A549 (cell line): ENCODE measurements at regions of chr14 and their contacts with region 1.

Region 1: GRCh38 chr14:59632381-59632780 is 55.8 kb upstream of the CCDC175 start:
- DNase-seq: peak; percentile 25 to 39
- ATAC-seq: peak; percentile 81 to 91
- H3K4me3 ChIP-seq: no peak overlapping the region
- H3K27ac ChIP-seq: no peak overlapping the region
- H3K4me1 ChIP-seq: no peaks in the 10 kb centered on the region
- CTCF ChIP-seq: peak; percentile 53
- EP300 ChIP-seq: no peak
- POLR2A ChIP-seq: no peak
- RAD21 ChIP-seq: peak; percentile 62 to 70

Region 2: DNA sequence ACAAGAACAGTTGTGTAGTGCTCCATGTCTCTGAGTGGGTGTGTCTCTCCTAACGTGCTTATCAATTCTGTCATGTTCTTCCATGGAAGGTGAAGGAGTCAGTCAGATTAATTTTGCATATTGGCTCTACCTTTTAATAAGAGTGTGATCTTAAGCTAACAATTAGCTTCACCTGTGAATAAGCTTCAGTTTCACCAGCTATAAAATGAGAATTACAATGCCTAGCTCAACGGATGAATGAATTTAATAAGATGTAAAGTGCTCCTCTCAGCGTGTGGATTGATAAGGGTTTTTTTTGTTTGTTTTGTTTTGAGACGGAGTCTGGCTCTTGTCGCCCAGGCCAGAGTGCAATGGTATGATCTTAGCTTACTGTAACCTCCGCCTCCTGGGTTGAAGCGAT is 88.5 kb before region 1 on chr14:
- CTCF ChIA-PET with region 1: no interaction called
- POLR2A ChIA-PET with region 1: no interaction called
- DNase-seq: no peak
- ATAC-seq: no peak
- H3K4me3 ChIP-seq: no peak overlapping the region
- H3K27ac ChIP-seq: no peak overlapping the region
- H3K4me1 ChIP-seq: no peaks in the 10 kb centered on the region
- CTCF ChIP-seq: no peak
- EP300 ChIP-seq: no peak
- POLR2A ChIP-seq: no peak
- RAD21 ChIP-seq: no peak

Region 3: DNA sequence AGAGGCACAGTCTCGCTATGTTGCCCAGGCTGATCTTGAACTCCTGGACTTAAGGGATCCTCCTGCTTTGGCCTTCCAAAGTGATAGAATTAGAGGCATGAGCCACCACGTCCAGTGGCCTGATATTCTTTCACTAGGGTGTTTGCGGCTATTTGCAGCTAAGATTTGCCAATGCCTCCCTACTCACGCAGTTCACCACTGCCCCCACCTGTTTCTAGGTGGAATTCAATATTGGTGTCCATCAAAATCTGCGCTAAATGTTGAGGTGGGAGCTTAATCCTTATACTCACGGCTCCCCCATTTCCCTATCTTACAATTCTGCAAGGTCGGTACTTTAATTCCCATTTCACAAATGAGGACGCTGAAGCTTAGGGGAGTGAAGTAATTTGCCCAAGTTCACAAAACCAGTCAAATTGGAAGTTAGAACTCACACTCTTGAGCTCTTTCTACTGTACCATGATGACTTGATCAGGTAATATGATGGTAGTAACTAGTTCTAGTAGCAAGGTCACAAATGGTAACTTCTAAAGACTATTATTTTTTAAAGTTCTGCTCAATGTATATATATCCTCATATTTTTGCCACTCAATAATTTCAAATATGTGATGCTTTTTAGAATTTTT is 265.5 kb after region 1 on chr14:
- CTCF ChIA-PET with region 1: interaction called, 11 read pairs
- POLR2A ChIA-PET with region 1: no interaction called
- DNase-seq: peak; percentile 13 to 40
- ATAC-seq: peak; percentile 47 to 86; a peak in 4 of 6 replicates
- H3K4me3 ChIP-seq: no peak overlapping the region
- H3K27ac ChIP-seq: no peak overlapping the region
- H3K4me1 ChIP-seq: no peaks in the 10 kb centered on the region
- CTCF ChIP-seq: peak; percentile 35; the same call in 2 of the 3 replicates
- EP300 ChIP-seq: no peak
- POLR2A ChIP-seq: no peak
- RAD21 ChIP-seq: peak; percentile 51 to 68; a peak in 4 of 5 replicates